Activated naive CD4-positive, alpha-beta T cell treated with anti-CD3 and anti-CD28 coated beads for 36 hours (primary cell): ENCODE measurements at regions of chr6 and their contacts with region 1.

Region 1: GRCh38 chr6:99330159-99330558 is 19.3 kb downstream of the FAXC start:
- DNase-seq: peak; percentile 84
- H3K4me3 Mint-ChIP-seq: no peak overlapping the region
- H3K27ac Mint-ChIP-seq: no peak overlapping the region
- H3K4me1 Mint-ChIP-seq: peaks cover 4% of the 10 kb centered on the region
- H3K27me3 Mint-ChIP-seq: peaks cover 7% of the 10 kb centered on the region

Region 2: GRCh38 chr6:99282491-99283062 is 47.6 kb before region 1 on chr6:
- CTCF ChIA-PET with region 1: interaction called, 3 read pairs
- intact Hi-C with region 1: loop called (anchors 2 kb)
- DNase-seq: no peak
- H3K4me3 Mint-ChIP-seq: no peak overlapping the region
- H3K27ac Mint-ChIP-seq: no peak overlapping the region
- H3K4me1 Mint-ChIP-seq: no peaks in the 10 kb centered on the region
- H3K27me3 Mint-ChIP-seq: peaks cover 6% of the 10 kb centered on the region

Region 3: DNA sequence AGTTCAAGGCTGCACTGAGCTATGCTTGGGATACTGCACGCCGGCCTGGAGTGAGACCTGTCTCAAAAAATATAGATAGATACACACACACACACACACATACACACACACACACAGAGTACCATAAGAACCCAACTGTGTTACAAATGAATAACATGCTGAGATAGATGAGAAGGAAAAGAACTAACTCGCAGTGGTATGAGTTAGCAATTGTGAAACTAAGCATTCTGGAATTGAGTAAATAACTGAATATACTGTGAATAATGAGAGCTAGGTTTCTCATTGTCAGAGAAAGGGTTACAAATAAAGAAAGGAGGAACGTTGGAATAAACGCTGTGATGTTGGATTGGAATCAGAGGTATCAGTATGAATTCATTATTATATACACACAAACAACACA is 33.9 kb after region 1 on chr6:
- CTCF ChIA-PET with region 1: interaction called, 4 read pairs
- intact Hi-C with region 1: loop called (anchors 2 kb)
- DNase-seq: no peak
- H3K4me3 Mint-ChIP-seq: no peak overlapping the region
- H3K27ac Mint-ChIP-seq: no peak overlapping the region
- H3K4me1 Mint-ChIP-seq: peaks cover 3% of the 10 kb centered on the region
- H3K27me3 Mint-ChIP-seq: peaks cover 2% of the 10 kb centered on the region

Region 4: GRCh38 chr6:99434702-99435530 is 104.8 kb after region 1 on chr6:
- CTCF ChIA-PET with region 1: interaction called, 14 read pairs
- intact Hi-C with region 1: loop called (anchors 2 kb)
- DNase-seq: no peak
- H3K4me3 Mint-ChIP-seq: no peak overlapping the region
- H3K27ac Mint-ChIP-seq: no peak overlapping the region
- H3K4me1 Mint-ChIP-seq: no peaks in the 10 kb centered on the region
- H3K27me3 Mint-ChIP-seq: no peaks in the 10 kb centered on the region

Region 5: GRCh38 chr6:99613409-99613704 is 283.2 kb after region 1 on chr6:
- CTCF ChIA-PET with region 1: no interaction called
- intact Hi-C with region 1: loop called (anchors 5 kb)
- DNase-seq: peak; percentile 35
- H3K4me3 Mint-ChIP-seq: peak overlapping the region; percentile 34
- H3K27ac Mint-ChIP-seq: no peak overlapping the region
- H3K4me1 Mint-ChIP-seq: peaks cover 30% of the 10 kb centered on the region
- H3K27me3 Mint-ChIP-seq: peaks cover 70% of the 10 kb centered on the region

Region 6: GRCh38 chr6:100880853-100881706 is 1550.9 kb after region 1 on chr6 and contains the start of gene ASCC3:
- CTCF ChIA-PET with region 1: no interaction called
- intact Hi-C with region 1: loop called (anchors 10 kb)
- DNase-seq: peak; percentile 93
- H3K4me3 Mint-ChIP-seq: peak within 1 kb of the TSS; percentile 100
- H3K27ac Mint-ChIP-seq: peak within 1 kb of the TSS; percentile 99
- H3K4me1 Mint-ChIP-seq: peaks cover 40% of the 10 kb centered on the region
- H3K27me3 Mint-ChIP-seq: no peaks in the 10 kb centered on the region
- total RNA-seq, gene ASCC3: 55.9 to 58.4 TPM